SK-N-SH (cell line): ENCODE measurements at regions of chr17 and their contacts with region 1.

Region 1: DNA sequence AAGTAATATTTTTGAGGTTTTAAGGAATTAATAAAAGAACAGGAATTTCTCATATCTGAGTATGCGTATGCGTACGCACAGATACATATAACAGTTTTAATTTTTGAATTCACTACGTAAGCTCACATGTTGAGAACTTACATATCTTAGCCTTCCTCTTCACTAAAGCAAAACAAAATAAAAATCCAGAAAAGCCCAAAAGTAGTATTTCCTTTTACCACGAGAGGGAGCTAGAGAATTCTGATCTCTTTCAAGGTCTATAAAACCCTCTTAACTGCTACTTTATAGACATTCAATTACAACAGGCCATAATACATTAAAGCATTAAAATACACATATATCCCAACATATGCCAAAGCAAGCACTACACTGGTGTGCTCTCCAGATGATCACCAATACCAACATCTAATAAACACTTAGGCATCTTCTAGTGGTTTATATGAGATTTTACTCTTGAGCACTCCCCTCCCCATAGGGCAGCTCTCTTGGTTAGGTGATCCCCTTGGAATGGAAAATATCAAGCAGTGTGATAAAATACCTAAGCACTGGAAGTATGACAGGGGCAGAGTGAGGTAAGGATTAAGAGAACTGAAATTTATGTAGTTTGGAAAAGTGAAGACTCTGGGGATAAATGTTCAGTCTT is 94.0 kb downstream of the SKAP1 start:
- DNase-seq: peak; percentile 34
- H3K4me3 ChIP-seq: no peak overlapping the region
- H3K27ac ChIP-seq: no peak overlapping the region
- H3K4me1 ChIP-seq: no peaks in the 10 kb centered on the region
- H3K27me3 ChIP-seq: peaks cover 52% of the 10 kb centered on the region
- CTCF ChIP-seq: peak; percentile 95
- EP300 ChIP-seq: no peak
- RAD21 ChIP-seq: peak; percentile 73

Region 2: DNA sequence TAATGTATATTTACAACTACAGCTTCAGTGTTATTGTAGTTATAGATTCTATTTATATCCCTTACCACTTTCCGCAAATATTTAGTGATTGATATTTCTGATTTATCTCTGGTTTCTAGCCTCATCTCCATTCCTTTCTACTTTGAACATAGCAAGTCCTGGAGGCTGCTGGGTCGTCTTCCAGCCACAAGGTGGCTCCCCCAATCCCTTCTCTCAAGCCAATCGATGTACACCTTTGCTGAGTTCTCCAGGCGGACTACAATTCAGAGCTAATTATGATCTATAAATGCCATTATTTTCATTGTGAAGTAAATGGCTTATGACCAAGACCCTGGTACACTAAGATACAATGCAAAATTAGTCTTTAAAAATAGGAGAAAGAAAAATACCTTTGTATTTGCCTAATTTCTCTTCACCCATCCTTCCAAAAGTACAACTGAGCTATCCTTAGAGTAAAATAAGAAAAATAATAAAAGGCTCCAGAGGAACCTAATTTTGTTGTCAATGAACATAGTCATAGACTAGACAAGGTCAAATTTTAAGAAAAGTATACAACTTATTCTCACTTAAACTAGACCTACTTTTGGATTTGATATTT is 28.1 kb before region 1 on chr17:
- CTCF ChIA-PET with region 1: interaction called, 18 read pairs
- POLR2A ChIA-PET with region 1: no interaction called
- DNase-seq: peak; percentile 48
- H3K4me3 ChIP-seq: no peak overlapping the region; a peak in 1 of 4 replicates
- H3K27ac ChIP-seq: no peak overlapping the region
- H3K4me1 ChIP-seq: no peaks in the 10 kb centered on the region; a peak in 1 of 4 replicates
- H3K27me3 ChIP-seq: peaks cover 52% of the 10 kb centered on the region
- CTCF ChIP-seq: peak; percentile 97
- EP300 ChIP-seq: no peak
- RAD21 ChIP-seq: peak; percentile 67

Region 3: GRCh38 chr17:48351831-48352332 is 15.9 kb after region 1 on chr17:
- CTCF ChIA-PET with region 1: interaction called, 66 read pairs
- POLR2A ChIA-PET with region 1: no interaction called
- DNase-seq: peak; percentile 32
- H3K4me3 ChIP-seq: no peak overlapping the region; a peak in 1 of 4 replicates
- H3K27ac ChIP-seq: no peak overlapping the region
- H3K4me1 ChIP-seq: no peaks in the 10 kb centered on the region
- H3K27me3 ChIP-seq: peaks cover 50% of the 10 kb centered on the region
- CTCF ChIP-seq: peak; percentile 94
- EP300 ChIP-seq: no peak
- RAD21 ChIP-seq: peak; percentile 62

Region 4: DNA sequence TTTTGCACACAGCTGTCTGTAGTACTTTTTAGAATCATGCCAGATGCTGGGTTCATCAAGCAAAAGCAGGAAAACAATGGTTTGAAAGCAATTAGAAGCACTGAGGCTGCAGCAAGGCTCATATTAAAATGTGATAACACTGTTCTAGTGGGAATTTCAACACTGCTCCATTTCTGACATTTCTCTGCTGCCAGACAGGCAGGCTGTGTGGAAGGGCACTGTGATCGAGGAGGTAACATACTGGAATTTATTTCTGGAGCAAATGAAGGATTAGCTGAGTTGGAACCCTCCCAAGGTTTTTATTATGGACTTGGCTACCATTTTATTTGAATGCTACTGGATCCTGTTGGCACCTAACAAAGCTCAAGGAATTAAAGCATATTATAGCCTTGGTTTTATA is 27.2 kb after region 1 on chr17:
- CTCF ChIA-PET with region 1: interaction called, 14 read pairs
- POLR2A ChIA-PET with region 1: no interaction called
- DNase-seq: no peak
- H3K4me3 ChIP-seq: no peak overlapping the region
- H3K27ac ChIP-seq: no peak overlapping the region
- H3K4me1 ChIP-seq: no peaks in the 10 kb centered on the region
- H3K27me3 ChIP-seq: peaks cover 66% of the 10 kb centered on the region
- CTCF ChIP-seq: no peak
- EP300 ChIP-seq: no peak
- RAD21 ChIP-seq: no peak

Region 5: DNA sequence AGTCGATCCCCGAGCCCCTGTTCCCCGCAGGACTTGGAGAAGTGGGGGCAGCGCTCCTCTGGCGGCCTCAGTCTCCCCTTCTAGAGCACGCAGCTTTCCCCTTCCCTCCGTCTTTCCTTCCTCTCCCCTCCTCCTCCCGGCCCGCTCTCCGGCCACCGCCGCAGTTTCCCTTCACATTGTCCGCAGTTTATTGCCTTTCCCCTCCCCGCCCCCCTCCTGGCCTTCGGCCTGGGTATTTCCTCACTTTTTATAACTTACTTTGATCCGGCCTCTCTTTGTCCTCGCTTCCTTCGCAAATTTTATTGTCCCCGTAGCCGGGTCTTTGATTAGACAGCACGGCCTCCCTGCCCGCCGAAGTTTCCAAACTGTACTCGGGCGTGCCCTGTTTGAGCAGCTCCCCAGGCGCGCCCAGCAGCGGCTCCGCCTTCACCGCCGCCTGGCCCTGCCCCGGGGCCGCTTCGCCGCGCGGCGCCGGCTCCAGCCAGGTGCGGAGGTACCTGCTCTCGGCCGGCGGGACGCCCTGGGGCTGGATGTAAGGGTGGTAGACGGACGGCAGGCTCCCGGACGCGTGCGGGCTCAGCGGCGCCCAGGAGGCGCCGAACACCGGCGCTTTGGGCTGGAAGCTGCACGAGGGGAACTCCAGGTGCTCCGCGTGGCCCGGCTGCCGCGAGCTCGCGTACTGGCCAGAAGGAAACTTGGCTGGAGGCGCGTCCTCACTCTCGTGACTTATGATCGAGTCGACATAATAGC is 289.7 kb after region 1 on chr17:
- CTCF ChIA-PET with region 1: interaction called, 16 read pairs
- POLR2A ChIA-PET with region 1: no interaction called
- DNase-seq: no peak
- H3K4me3 ChIP-seq: no peak overlapping the region
- H3K27ac ChIP-seq: no peak overlapping the region
- H3K4me1 ChIP-seq: no peaks in the 10 kb centered on the region
- H3K27me3 ChIP-seq: peaks cover 98% of the 10 kb centered on the region
- CTCF ChIP-seq: no peak
- EP300 ChIP-seq: no peak
- RAD21 ChIP-seq: no peak